Heart right ventricle (tissue), 16 donors: ENCODE measurements at regions of chr3 and their contacts with region 1.

Region 1: GRCh38 chr3:50611464-50612233 is at the start of gene CISH:
- DNase-seq: peak; percentile 95 to 97
- ATAC-seq: peak; percentile 79 to 88 (median 84)
- H3K4me3 ChIP-seq: peak within 1 kb of the TSS; percentile 42 to 93 (median 78)
- H3K27ac ChIP-seq: peak within 1 kb of the TSS; percentile 72 to 99 (median 95)
- H3K4me1 ChIP-seq: peaks cover 11 to 82% (median 68%) of the 10 kb centered on the region in 9 donors
- H3K27me3 ChIP-seq: no peaks in the 10 kb centered on the region
- CTCF ChIP-seq: peak in 7 of 9 donors; percentile 29 to 58 (median 45)
- total RNA-seq, gene CISH: 5.4 to 131 (median 24.0) TPM

Region 2: GRCh38 chr3:50008931-50009330 is 602.7 kb before region 1 on chr3:
- intact Hi-C with region 1: no loop called
- DNase-seq: no peak
- ATAC-seq: no peak
- H3K4me3 ChIP-seq: no peak overlapping the region
- H3K27ac ChIP-seq: no peak overlapping the region
- H3K4me1 ChIP-seq: no peaks in the 10 kb centered on the region
- H3K27me3 ChIP-seq: no peaks in the 10 kb centered on the region
- CTCF ChIP-seq: no peak

Region 3: DNA sequence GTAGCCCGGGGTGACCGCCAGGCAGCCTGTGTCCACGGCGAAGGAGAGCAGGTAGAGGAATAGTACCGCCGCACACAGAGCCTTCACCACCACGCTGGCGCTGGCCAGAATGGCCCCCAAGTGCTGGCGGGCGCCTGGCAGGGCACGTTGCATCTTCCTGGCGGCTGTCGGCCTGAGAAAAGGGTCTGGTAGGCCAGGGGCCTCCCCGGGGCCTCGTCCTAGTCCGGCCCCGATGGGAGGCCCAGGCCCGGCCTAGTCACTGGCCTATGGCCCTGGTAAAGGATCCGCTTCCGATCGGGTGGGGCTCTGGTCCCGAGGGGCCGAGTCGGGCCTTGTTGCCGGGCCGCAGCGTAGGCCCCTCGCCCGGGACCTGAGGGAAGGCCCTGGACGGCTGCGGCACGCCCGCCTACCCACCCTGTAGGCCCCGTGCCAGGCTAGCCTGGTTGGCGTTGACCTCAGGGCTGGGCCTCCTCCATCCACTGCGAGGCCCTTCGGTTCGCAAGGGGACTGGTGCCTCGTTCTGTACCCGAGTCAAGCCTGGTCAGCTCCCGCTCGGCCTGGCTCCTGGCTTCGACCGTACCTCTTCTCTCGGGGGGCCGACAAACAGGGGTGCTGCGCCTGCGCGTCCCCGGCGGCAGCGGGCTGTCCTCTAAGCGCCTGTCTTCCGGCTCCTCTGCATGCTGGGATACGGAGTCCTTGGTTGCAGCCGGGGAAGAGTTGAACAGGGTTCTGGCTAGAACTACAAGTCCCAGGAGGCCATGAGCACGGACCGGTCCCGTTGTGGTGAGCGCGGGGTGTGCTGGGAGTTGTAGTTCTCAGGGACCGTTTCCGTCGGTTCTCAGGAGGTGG is 252.5 kb before region 1 on chr3 and contains the start of gene TMEM115:
- intact Hi-C with region 1: loop called in 2 of 10 experiments (anchors 5 kb)
- DNase-seq: peak; percentile 93 to 99
- ATAC-seq: peak; percentile 96 to 99 (median 97)
- H3K4me3 ChIP-seq: peak within 1 kb of the TSS; percentile 76 to 100 (median 91)
- H3K27ac ChIP-seq: peak within 1 kb of the TSS; percentile 88 to 98 (median 94)
- H3K4me1 ChIP-seq: peaks cover 28 to 49% (median 42%) of the 10 kb centered on the region in 9 donors
- H3K27me3 ChIP-seq: no peaks in the 10 kb centered on the region
- CTCF ChIP-seq: no peak
- total RNA-seq, gene TMEM115: 18.7 to 32.8 (median 24.2) TPM

Region 4: DNA sequence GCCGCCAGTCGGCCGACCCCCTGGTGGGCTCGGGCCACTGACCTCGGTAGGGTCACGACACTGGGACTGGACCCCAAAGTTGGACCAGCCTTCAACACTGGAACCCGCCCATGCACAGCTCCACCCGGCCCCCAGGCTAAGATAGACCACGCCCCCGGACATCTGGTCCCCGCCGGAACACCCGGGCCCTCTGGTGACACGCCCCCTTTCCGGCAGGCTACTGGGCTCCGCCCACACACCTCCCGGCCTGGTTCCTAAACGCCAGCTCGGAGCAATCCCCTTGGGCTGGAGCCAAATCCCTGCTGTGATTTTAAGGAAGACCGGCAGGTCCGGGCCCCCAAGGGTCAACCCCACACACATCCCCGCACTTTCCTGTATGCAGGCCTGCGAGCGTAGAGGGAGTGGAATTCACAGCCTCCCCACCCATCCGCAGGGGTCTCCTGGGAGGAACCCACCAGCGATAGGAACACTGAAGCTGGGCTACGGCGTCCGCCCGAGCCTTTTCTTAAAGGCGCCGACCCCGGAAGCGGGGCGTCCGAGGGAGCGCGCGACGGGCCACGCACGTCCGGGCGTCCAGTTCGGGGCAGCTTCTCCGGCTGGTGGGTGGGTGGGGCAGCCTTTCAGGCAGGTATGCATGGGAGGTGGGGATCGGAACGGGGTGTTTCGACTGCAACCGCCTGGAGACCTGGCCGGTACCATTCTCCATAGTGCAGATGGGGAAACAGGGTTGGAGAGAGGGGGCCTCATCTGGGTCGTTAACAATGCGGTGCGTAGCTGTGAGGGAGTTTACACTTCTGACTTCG is 42.5 kb before region 1 on chr3 and contains the start of gene HEMK1:
- intact Hi-C with region 1: loop called (anchors 1 to 2 kb)
- DNase-seq: peak; percentile 98 to 99
- ATAC-seq: peak; percentile 85 to 95 (median 90)
- H3K4me3 ChIP-seq: peak within 1 kb of the TSS; percentile 35 to 92 (median 78)
- H3K27ac ChIP-seq: peak within 1 kb of the TSS; percentile 85 to 95 (median 92)
- H3K4me1 ChIP-seq: peaks cover 11 to 69% (median 47%) of the 10 kb centered on the region in 9 donors
- H3K27me3 ChIP-seq: no peaks in the 10 kb centered on the region
- CTCF ChIP-seq: no peak
- total RNA-seq, gene HEMK1: 10.6 to 19.0 (median 14.8) TPM

Region 5: GRCh38 chr3:50885070-50885850 is 273.6 kb after region 1 on chr3:
- intact Hi-C with region 1: loop called in 2 of 10 experiments (anchors 5 kb)
- DNase-seq: no peak
- ATAC-seq: no peak
- H3K4me3 ChIP-seq: no peak overlapping the region
- H3K27ac ChIP-seq: no peak overlapping the region
- H3K4me1 ChIP-seq: no peaks in the 10 kb centered on the region
- H3K27me3 ChIP-seq: no peaks in the 10 kb centered on the region
- CTCF ChIP-seq: peak in 5 of 9 donors; percentile 13 to 44 (median 32)

Region 6: GRCh38 chr3:51371943-51372557 is 760.4 kb after region 1 on chr3:
- intact Hi-C with region 1: loop called in 7 of 10 experiments (anchors 5 kb)
- DNase-seq: no peak
- ATAC-seq: peak in 3 of 8 donors; percentile 27 to 46 (median 44)
- H3K4me3 ChIP-seq: no peak overlapping the region
- H3K27ac ChIP-seq: no peak overlapping the region
- H3K4me1 ChIP-seq: no peaks in the 10 kb centered on the region
- H3K27me3 ChIP-seq: peaks cover 0 to 4% (median 0%) of the 10 kb centered on the region in 7 donors
- CTCF ChIP-seq: peak; percentile 16 to 71 (median 62)

Region 7: GRCh38 chr3:51391075-51391567 is 779.5 kb after region 1 on chr3 and contains the start of gene RBM15B:
- intact Hi-C with region 1: loop called in 4 of 10 experiments (anchors 1 to 5 kb)
- DNase-seq: peak; percentile 97 to 98
- ATAC-seq: peak; percentile 94 to 98 (median 97)
- H3K4me3 ChIP-seq: peak within 1 kb of the TSS; percentile 36 to 76 (median 68)
- H3K27ac ChIP-seq: peak within 1 kb of the TSS; percentile 61 to 97 (median 90)
- H3K4me1 ChIP-seq: peaks cover 33 to 91% (median 85%) of the 10 kb centered on the region in 9 donors
- H3K27me3 ChIP-seq: no peaks in the 10 kb centered on the region
- CTCF ChIP-seq: peak in 7 of 9 donors; percentile 90 to 99 (median 92)
- total RNA-seq, gene RBM15B: 11.3 to 17.1 (median 13.7) TPM